AG04449 (cell line): ENCODE measurements at regions of chr4 and their contacts with region 1.

Region 1: DNA sequence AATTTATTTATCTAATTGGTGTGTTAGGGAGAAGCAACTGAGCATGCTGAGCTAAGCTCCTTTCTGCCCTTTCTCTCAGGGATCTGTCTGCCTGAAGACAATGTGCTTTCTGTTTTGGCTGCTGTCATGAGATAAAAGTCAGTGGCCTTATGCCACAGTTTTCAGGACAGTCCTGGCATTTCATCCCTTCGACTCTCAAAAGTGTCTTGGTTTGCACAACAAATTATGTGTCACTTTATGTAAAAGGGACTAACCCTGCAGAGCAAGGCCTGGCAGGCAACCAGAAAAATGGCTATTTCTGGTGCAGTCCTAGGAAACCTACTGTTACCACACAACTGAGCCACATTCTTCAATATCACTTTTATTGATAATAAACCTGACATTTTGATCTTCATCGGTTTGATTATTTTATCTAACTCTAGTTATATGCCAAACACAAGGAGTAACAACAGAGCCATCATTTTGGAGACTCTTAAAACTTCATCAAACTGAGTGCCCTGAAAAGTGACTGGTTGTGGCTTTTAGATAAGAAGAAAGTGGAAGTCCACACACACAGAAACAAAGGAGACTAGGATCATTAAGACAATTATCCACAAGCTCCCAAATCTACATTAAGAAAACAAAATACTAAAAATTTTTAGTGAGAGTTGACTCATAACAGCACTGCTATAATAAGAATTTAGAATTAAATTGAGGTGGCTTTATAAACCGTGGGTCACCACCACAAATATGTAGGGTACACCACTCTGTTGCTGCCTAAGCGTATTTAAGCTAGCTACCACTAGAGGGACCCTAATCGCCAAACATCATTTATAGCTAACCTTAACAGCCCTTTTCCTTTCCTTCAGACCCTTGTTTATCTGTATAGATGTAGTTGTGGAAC is 95.9 kb upstream of the PTPN13 start:
- DNase-seq: no peak
- H3K4me3 ChIP-seq: no peak overlapping the region
- CTCF ChIP-seq: peak; percentile 75

Region 2: GRCh38 chr4:86487738-86488348 is 10.4 kb before region 1 on chr4:
- CTCF ChIA-PET with region 1: interaction called, 37 read pairs
- POLR2A ChIA-PET with region 1: no interaction called
- DNase-seq: no peak
- H3K4me3 ChIP-seq: no peak overlapping the region
- CTCF ChIP-seq: no peak

Region 3: DNA sequence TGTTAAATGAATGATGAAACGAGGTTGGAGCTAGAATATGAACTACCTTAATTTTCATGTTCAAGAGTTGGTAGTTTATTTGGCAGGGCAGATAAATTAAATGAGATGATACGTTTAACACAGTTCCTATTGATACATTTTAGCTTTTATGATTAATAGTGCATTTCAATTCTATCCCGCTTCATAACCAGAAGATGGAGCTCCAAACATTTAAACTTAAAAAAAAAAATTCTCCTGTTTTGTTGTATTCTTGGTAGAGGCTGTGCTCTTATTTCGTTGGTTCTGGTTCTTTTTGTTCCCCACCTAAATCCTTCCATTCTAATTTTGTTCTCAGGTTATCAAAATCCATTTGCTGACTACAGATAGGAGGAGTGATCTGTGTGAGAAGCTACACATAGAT is 24.1 kb after region 1 on chr4:
- CTCF ChIA-PET with region 1: interaction called, 23 read pairs
- POLR2A ChIA-PET with region 1: no interaction called
- DNase-seq: no peak
- H3K4me3 ChIP-seq: no peak overlapping the region
- CTCF ChIP-seq: no peak

Region 4: DNA sequence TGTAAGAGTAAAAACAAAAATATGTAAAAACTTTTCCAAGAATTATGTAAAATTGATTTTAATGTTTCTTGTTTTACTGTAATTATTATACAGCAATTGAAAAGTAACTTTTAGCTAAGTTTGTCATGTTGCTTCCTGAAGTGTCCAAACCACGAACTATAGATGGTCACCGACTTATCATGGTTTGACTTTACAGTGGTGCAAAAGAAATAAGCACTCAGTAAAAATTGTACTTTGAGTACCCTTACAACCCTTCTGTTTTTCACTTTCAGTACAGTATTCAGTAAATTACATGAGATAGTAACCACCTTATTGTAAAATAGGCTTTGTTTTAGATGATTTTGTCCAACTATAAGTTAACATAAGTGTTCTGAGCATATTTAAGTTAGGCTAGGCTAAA is 257.2 kb after region 1 on chr4:
- CTCF ChIA-PET with region 1: interaction called, 10 read pairs
- POLR2A ChIA-PET with region 1: no interaction called
- DNase-seq: no peak
- H3K4me3 ChIP-seq: no peak overlapping the region
- CTCF ChIP-seq: no peak

Region 5: GRCh38 chr4:86895692-86896488 is 397.7 kb after region 1 on chr4:
- CTCF ChIA-PET with region 1: interaction called, 180 read pairs
- POLR2A ChIA-PET with region 1: no interaction called
- DNase-seq: peak; percentile 34
- H3K4me3 ChIP-seq: no peak overlapping the region
- CTCF ChIP-seq: peak; percentile 55

Region 6: DNA sequence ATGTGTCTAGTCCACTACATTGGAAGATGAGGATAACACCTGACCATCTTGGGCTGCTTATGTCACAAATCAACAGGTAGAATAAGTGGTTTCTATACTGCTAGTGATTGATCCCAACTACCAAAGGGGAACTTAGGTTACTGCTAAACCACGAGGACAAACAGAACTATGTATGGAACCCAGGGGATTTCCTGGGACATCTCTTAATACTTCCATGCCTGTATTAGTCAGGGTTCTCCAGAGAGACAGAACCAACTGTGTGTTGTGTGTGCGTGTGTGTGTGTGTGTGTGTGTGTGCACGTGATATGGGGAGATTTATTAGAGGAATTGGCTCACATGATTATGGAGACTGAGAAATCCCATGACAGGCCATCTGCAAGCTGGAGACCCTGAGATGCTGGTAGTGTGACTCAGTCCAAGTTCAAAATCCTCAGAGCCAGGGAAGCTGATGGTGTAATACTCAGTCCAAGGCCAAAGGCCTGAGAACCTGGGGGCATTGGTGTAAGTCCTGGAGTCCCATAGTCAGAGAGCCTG is 420.4 kb after region 1 on chr4:
- CTCF ChIA-PET with region 1: interaction called, 50 read pairs
- POLR2A ChIA-PET with region 1: no interaction called
- DNase-seq: peak; percentile 73
- H3K4me3 ChIP-seq: no peak overlapping the region
- CTCF ChIP-seq: no peak